Lower leg skin (tissue), 4 donors: ENCODE measurements at regions of chr22 and their contacts with region 1.

Region 1: DNA sequence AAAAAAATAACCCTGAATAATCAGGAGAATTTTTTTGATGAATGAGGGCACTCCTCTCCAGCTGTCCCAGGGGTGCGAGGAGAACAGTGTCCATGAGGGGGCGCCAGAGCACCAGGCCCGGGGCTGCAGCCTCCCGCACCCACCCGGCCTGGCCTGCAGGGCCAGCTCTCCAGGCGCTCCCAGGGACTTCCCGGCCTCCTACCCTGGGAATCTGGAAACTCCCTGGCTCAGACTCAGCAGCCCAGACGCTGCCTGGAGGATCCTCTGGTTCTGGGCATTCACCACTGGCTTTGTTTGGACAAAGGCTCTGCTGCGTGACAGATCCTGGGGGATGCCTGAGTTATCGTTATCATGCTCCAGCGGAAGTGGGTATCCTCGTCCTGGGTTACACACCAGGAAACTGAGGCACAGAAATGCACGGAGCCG is 31.0 kb downstream of the MCM5 start:
- DNase-seq: peak; percentile 77 to 97
- H3K4me3 ChIP-seq: no peak overlapping the region
- CTCF ChIP-seq: peak in 1 of 3 donors; percentile 91
- POLR2A ChIP-seq: no peak

Region 2: GRCh38 chr22:35397095-35397904 is 33.6 kb before region 1 on chr22:
- intact Hi-C with region 1: no loop called
- DNase-seq: no peak
- H3K4me3 ChIP-seq: no peak overlapping the region
- CTCF ChIP-seq: no peak
- POLR2A ChIP-seq: no peak

Region 3: GRCh38 chr22:35575116-35575748 is 144.3 kb after region 1 on chr22:
- intact Hi-C with region 1: loop called (anchors 5 kb)
- DNase-seq: no peak
- H3K4me3 ChIP-seq: no peak overlapping the region
- CTCF ChIP-seq: no peak
- POLR2A ChIP-seq: no peak

Region 4: DNA sequence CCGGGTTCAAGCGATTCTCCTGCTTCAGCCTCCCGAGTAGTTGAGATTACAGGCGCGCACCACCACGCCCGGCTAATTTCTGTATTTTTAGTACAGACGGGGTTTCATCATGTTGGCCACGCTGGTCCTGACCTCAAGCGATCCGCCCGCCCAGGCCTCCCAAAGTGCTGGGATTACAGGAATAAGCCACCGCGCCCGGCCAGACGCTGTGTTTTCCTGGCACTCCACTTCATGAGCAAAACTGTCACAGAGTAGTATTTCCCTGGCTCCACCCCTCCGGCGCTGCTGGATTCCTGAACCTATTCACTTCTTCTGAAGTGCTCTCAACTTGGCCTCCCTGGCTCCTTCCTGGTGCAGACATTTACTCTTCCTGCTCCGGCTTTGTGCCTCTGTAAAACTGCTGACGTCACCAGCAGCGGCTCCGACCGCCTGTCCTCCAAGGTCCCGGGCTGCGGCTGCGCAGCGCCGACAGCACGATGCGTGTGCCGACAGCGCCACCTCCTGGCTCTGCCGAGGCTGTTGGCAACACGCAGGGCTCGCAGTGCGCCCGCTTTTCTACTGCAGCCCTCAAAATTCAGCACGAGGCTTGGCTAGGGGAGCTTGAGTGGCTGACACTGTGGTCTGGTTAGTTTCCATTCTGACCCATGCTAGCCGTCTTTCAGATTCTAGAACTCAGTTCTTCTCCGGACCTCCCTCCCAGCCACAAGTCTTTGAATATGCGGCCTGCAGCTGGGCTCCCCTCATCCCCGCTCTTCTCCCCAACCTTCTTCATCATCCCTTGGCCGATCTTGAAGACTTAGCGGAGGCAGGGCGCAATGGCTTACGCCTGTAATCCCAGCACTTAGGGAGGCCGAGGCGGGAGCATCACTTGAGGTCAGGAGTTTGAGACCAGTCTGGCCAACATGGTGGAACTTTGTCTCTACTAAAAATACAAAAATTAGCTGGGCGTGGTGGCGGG is 693.0 kb after region 1 on chr22:
- intact Hi-C with region 1: loop called (anchors 10 kb)
- DNase-seq: peak; percentile 92 to 98
- H3K4me3 ChIP-seq: no peak overlapping the region
- CTCF ChIP-seq: peak in 1 of 3 donors; percentile 90
- POLR2A ChIP-seq: no peak